Ovary (tissue), 10 donors: ENCODE measurements at regions of chr12 and their contacts with region 1.

Region 1: GRCh38 chr12:93002293-93003054 is 73.4 kb upstream of the EEA1 start:
- DNase-seq: peak in 3 of 5 donors; percentile 41 to 54 (median 54)
- H3K4me3 ChIP-seq: no peak overlapping the region
- H3K27ac ChIP-seq: peak overlapping the region in 1 of 2 donors; percentile 1
- H3K4me1 ChIP-seq: peaks cover 17% of the 10 kb centered on the region
- H3K27me3 ChIP-seq: no peaks in the 10 kb centered on the region
- CTCF ChIP-seq: no peak
- EP300 ChIP-seq: no peak
- POLR2A ChIP-seq: no peak

Region 2: GRCh38 chr12:93109551-93110203 is 107.2 kb after region 1 on chr12:
- intact Hi-C with region 1: loop called in 2 of 4 experiments (anchors 10 kb)
- DNase-seq: peak; percentile 48 to 68 (median 55)
- H3K4me3 ChIP-seq: no peak overlapping the region
- H3K27ac ChIP-seq: peak overlapping the region in 1 of 2 donors; percentile 81
- H3K4me1 ChIP-seq: peaks cover 30% of the 10 kb centered on the region
- H3K27me3 ChIP-seq: no peaks in the 10 kb centered on the region
- CTCF ChIP-seq: no peak
- EP300 ChIP-seq: no peak
- POLR2A ChIP-seq: no peak

Region 3: DNA sequence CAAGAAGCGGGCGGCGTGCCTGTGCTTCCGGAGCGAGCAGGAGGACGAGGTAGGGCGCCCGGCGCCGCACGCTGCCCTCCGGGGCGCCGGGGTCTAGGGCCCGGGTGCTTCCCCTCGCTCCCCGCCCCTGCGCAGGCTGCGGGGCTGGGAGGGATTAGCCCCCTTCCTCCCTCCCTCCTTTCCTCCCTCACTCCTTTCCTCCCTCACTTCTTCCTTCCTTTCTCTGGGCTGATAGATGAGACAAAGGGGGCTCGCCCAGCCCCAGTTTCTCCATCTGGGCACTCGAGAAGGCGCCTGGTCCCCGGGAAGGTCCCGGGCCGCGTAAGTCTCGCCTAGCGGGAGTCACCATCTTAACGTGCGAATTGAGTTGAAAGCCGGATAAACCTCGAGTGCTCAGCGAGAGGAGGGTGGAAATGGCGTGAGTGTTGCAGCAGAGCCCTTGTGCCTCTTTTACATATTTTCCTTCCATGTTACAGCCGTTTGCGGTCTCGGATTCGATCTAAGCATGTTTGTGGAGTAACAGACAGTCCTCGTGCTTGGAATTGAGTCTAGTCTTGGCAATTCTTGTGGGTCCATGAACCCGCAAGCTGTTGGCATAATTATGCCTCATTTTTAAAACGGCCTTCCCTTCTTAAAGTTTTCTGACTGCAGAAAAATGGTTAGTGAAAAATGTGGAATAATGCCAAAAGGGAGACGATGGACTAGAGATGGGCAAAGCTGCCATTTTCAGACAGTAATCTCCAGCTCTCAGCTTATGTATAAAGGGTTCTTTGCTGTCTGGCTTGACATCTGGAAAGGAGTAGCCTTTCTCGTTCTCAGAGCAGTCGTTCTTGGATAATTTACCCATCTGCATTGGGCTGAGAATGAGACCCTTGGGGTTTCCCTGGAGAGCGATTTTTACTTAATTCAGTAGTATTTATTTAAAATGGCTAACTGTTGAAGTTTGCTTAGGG is 376.2 kb after region 1 on chr12:
- intact Hi-C with region 1: loop called in 1 of 4 experiments (anchors 5 kb)
- DNase-seq: peak; percentile 26 to 63 (median 49)
- H3K4me3 ChIP-seq: peak overlapping the region; percentile 97
- H3K27ac ChIP-seq: peak overlapping the region; percentile 66 to 89
- H3K4me1 ChIP-seq: peaks cover 11% of the 10 kb centered on the region
- H3K27me3 ChIP-seq: no peaks in the 10 kb centered on the region
- CTCF ChIP-seq: no peak
- EP300 ChIP-seq: no peak
- POLR2A ChIP-seq: no peak

Region 4: DNA sequence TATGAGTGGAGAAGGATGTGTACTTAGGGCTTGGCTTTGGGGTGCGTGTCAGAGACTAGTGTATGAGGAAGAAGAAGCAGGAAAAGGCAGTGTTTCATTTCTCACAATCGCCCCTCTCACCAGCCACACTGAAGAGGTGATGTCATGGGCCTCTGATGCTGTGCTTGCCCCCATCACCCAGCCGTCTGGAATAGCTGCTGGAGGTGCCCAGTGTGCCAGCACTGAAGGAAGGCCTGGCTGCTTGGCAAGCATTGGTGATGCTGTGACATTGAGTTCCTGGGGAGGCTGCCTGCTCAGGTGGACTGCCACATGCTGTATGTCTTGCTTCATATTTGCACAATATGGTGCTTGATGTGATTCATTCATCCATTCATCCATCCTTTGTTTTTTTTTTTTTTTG is 730.9 kb after region 1 on chr12:
- intact Hi-C with region 1: no loop called
- DNase-seq: no peak
- H3K4me3 ChIP-seq: no peak overlapping the region
- H3K27ac ChIP-seq: no peak overlapping the region
- H3K4me1 ChIP-seq: peaks cover 3% of the 10 kb centered on the region
- H3K27me3 ChIP-seq: no peaks in the 10 kb centered on the region
- CTCF ChIP-seq: no peak
- EP300 ChIP-seq: no peak
- POLR2A ChIP-seq: no peak